ENCODE measurements at regions of chr2 and their contacts with region 1.

Region 1: GRCh38 chr2:224951723-224952481 is 90.4 kb downstream of the DOCK10 start:
- DNase-seq: peak; percentile 41
- ATAC-seq: peak; percentile 59
- H3K4me3 Mint-ChIP-seq: peak overlapping the region; percentile 40
- H3K27ac Mint-ChIP-seq: peak overlapping the region; percentile 89
- H3K4me1 Mint-ChIP-seq: peaks cover 86% of the 10 kb centered on the region
- H3K27me3 Mint-ChIP-seq: no peaks in the 10 kb centered on the region

Region 2: DNA sequence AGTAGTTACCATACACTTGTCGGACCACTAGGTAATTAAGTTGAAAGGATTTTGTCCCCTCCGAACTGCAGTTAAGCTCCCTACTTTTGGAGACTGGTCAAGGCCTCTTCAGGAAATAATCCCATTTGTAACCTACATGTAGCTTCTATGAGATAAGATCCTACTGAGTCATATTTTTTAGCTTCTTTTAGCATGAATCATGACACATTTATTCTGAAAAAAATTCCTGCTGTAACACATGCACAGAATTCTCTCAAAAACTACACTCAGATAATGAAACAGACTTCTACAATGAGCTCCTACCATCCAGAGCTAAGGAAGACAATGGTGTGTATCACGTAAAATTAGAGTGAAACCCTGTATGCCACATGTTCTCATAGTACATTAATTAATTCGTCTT is 135.1 kb before region 1 on chr2:
- CTCF ChIA-PET with region 1: no interaction called
- POLR2A ChIA-PET with region 1: no interaction called
- intact Hi-C with region 1: no loop called
- DNase-seq: no peak
- ATAC-seq: no peak
- H3K4me3 Mint-ChIP-seq: no peak overlapping the region
- H3K27ac Mint-ChIP-seq: peak overlapping the region; percentile 20
- H3K4me1 Mint-ChIP-seq: peaks cover 10% of the 10 kb centered on the region
- H3K27me3 Mint-ChIP-seq: no peaks in the 10 kb centered on the region

Region 3: GRCh38 chr2:224901121-224901676 is 50.7 kb before region 1 on chr2:
- CTCF ChIA-PET with region 1: no interaction called
- POLR2A ChIA-PET with region 1: no interaction called
- intact Hi-C with region 1: no loop called
- DNase-seq: peak; percentile 25
- ATAC-seq: peak; percentile 55
- H3K4me3 Mint-ChIP-seq: no peak overlapping the region
- H3K27ac Mint-ChIP-seq: peak overlapping the region; percentile 48
- H3K4me1 Mint-ChIP-seq: peaks cover 54% of the 10 kb centered on the region
- H3K27me3 Mint-ChIP-seq: no peaks in the 10 kb centered on the region

Region 4: GRCh38 chr2:224938651-224939182 is 13.2 kb before region 1 on chr2:
- CTCF ChIA-PET with region 1: interaction called, 5 read pairs
- POLR2A ChIA-PET with region 1: interaction called, 3 read pairs
- intact Hi-C with region 1: loop called in 1 of 2 experiments (anchors 1 kb)
- DNase-seq: peak; percentile 54
- ATAC-seq: peak; percentile 72
- H3K4me3 Mint-ChIP-seq: peak overlapping the region; percentile 68
- H3K27ac Mint-ChIP-seq: peak overlapping the region; percentile 92
- H3K4me1 Mint-ChIP-seq: peaks cover 85% of the 10 kb centered on the region
- H3K27me3 Mint-ChIP-seq: no peaks in the 10 kb centered on the region

Region 5: DNA sequence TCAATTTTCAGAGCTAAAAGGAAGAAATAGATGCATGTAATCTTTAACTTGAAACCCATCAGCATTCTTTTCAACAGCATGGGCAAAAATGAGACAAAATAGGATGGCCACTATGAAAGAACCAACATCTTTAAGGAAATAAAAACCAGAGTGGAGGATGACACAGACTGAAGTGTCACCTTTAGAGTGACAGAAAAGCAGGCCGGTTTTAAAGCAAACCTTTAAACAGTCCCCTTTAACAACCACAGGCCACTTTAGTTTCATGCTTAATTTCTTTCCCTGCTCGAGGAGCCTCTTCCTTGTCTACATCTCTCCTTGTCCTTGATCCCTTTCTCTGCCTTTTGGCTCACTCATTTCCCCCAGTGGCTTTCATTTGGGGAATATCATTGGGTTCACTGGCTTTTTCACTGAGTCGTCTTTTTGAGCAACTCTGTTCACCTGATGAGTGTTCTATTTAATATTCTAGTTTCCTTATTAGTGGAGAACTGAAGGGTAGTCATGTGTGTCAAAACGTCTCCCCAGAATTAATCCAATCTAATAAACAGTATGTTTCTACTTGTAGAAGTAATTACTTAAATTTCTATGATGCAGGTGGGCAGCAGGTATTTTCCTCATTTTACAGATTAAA is 17.8 kb after region 1 on chr2:
- CTCF ChIA-PET with region 1: interaction called, 3 read pairs
- POLR2A ChIA-PET with region 1: interaction called, 4 read pairs
- intact Hi-C with region 1: loop called (anchors 2 kb)
- DNase-seq: no peak
- ATAC-seq: peak; percentile 59
- H3K4me3 Mint-ChIP-seq: no peak overlapping the region
- H3K27ac Mint-ChIP-seq: peak overlapping the region; percentile 68
- H3K4me1 Mint-ChIP-seq: peaks cover 62% of the 10 kb centered on the region
- H3K27me3 Mint-ChIP-seq: no peaks in the 10 kb centered on the region

Region 6: DNA sequence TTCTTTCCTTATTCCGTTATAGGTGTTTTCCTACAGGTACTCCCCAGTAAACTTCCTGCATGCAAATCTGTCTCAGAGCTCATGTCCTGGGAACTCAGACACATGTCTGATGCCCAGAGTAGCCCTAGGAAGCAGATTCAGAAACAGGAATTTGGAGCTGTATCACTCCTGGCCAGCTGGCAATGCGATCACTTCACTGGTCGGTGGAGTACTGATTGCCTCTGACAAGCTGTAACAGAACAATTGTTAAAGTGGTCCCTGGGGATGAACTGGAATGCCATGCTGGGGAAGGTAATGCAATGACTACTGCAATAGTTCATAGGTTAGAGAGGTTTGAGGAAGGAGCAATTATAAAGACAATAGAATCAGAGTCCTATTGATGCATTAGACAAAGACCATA is 222.0 kb after region 1 on chr2:
- CTCF ChIA-PET with region 1: no interaction called
- POLR2A ChIA-PET with region 1: no interaction called
- intact Hi-C with region 1: no loop called
- DNase-seq: no peak
- ATAC-seq: no peak
- H3K4me3 Mint-ChIP-seq: no peak overlapping the region
- H3K27ac Mint-ChIP-seq: no peak overlapping the region
- H3K4me1 Mint-ChIP-seq: no peaks in the 10 kb centered on the region
- H3K27me3 Mint-ChIP-seq: no peaks in the 10 kb centered on the region

Region 7: GRCh38 chr2:225192869-225193268 is 241.0 kb after region 1 on chr2:
- CTCF ChIA-PET with region 1: no interaction called
- POLR2A ChIA-PET with region 1: no interaction called
- intact Hi-C with region 1: no loop called
- DNase-seq: no peak
- ATAC-seq: no peak
- H3K4me3 Mint-ChIP-seq: no peak overlapping the region
- H3K27ac Mint-ChIP-seq: no peak overlapping the region
- H3K4me1 Mint-ChIP-seq: no peaks in the 10 kb centered on the region
- H3K27me3 Mint-ChIP-seq: no peaks in the 10 kb centered on the region

Measured in activated CD4-positive, alpha-beta T cell treated with anti-CD3 and anti-CD28 coated beads for 36 hours (primary cell).